BJ (cell line): ENCODE measurements at regions of chr21 and their contacts with region 1.

Region 1: GRCh38 chr21:42117229-42117966 is 46.3 kb downstream of the UMODL1 start:
- DNase-seq: no peak
- H3K4me3 ChIP-seq: no peak overlapping the region
- H3K27me3 ChIP-seq: peaks cover 18% of the 10 kb centered on the region
- CTCF ChIP-seq: peak; percentile 91

Region 2: DNA sequence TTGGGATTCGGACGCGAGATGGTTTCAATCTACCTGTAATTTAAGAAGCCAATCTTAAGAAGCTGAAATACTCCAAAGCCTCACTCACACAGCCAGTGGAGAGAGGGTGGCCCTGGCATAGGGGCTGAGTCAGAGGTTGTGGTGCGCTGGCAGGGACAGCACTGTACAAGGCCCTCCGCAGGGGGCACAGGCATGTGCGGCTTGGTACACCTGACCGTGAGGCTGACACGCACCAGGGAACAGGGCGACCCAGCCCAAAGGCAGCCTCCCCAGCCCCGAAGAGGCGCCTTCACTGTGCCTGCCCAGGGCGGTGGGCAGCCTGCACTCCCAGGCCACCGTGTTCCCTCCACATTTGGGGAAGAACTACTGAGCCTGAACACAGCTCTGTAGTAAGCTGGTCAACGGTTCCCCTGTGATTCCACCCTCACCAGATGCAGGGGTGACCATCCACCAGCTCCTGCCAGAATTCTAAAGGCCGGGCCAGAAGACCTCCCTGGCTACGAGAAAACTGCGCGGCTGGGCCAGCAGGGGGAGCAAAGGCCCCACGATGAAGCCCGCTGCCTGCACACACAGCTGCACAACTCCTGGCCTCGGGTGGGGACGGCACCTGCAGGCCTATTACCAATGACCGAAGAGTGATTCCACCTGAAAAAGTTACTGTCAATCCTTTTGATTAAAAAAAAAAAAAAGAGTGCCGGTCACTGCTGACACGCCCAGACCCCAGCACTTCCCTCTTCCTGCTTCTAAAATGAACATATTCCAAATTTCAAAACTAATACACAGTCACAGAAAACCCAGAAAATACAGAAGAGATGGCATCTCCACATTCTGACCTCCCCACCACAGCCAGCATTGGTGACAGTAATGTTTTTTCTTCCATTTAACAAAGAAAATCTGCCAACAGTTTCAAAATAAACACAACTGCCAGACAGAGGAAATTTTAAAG is 300.9 kb before region 1 on chr21:
- CTCF ChIA-PET with region 1: interaction called, 66 read pairs
- POLR2A ChIA-PET with region 1: no interaction called
- DNase-seq: no peak
- H3K4me3 ChIP-seq: no peak overlapping the region
- H3K27me3 ChIP-seq: no peaks in the 10 kb centered on the region
- CTCF ChIP-seq: peak; percentile 95

Region 3: DNA sequence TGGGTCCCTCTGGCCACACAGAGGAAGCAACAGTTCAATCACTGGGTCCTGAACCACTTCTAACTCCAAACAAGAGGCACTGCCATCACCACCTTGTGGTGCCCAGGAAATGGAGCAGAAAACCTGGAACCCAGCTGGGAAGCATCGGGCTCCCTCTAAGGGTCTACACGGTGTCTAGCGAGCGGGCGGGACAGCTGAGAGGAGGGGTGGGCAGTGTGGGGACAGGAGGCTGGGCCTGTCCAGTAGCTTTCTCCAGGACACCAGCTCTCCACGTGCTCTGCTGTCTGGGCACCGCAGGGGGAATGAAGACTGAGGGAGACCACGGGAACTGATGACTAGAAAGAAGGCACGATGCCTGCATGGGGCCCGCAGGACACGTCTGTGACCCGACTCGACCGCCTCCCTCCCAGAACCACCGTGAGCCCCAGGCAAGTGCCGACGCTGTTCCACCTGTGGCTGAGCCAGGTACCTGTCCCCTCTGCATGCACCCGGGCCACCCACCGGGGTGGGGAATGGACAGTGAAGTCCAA is 232.8 kb before region 1 on chr21:
- CTCF ChIA-PET with region 1: interaction called, 13 read pairs
- POLR2A ChIA-PET with region 1: no interaction called
- DNase-seq: no peak
- H3K4me3 ChIP-seq: no peak overlapping the region
- H3K27me3 ChIP-seq: no peaks in the 10 kb centered on the region
- CTCF ChIP-seq: no peak

Region 4: DNA sequence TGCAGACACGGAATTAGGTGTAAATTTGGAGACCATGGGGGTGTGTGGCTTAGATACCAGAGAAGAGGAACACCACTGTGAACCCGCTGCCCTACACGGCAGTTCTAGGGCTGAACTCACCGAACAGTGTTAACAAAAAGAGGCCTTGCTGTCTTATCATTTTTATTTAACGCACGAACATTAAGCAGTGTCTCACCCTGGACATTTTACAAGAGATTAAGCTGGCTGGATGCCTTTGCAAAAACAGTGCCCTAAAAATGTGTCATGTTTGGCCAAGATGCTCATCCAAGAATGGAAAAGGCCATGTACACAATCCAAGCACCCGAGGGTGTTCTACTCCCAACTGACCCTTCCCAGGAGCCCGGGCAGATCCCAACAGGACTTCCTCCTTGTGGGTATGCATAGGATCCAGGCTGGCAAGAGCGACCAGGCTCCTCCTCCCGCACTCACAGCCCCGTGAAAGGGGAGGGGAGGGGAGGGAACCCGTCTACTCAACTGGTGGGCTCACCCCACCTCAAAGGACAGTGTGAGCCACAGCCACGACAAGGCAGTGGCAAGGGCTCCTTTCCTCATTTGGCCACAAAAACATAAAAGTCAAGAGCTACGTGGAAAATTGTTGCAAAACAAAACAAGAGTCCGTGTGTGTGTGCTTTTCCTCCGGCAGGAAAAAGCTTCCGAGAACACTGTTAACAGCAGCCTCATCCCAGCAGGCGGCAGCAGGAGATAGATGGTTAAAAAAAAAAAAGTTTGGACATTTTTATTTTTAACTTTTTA is 183.9 kb before region 1 on chr21:
- CTCF ChIA-PET with region 1: interaction called, 20 read pairs
- POLR2A ChIA-PET with region 1: no interaction called
- DNase-seq: no peak
- H3K4me3 ChIP-seq: peak overlapping the region; percentile 20
- H3K27me3 ChIP-seq: no peaks in the 10 kb centered on the region
- CTCF ChIP-seq: peak; percentile 44

Region 5: DNA sequence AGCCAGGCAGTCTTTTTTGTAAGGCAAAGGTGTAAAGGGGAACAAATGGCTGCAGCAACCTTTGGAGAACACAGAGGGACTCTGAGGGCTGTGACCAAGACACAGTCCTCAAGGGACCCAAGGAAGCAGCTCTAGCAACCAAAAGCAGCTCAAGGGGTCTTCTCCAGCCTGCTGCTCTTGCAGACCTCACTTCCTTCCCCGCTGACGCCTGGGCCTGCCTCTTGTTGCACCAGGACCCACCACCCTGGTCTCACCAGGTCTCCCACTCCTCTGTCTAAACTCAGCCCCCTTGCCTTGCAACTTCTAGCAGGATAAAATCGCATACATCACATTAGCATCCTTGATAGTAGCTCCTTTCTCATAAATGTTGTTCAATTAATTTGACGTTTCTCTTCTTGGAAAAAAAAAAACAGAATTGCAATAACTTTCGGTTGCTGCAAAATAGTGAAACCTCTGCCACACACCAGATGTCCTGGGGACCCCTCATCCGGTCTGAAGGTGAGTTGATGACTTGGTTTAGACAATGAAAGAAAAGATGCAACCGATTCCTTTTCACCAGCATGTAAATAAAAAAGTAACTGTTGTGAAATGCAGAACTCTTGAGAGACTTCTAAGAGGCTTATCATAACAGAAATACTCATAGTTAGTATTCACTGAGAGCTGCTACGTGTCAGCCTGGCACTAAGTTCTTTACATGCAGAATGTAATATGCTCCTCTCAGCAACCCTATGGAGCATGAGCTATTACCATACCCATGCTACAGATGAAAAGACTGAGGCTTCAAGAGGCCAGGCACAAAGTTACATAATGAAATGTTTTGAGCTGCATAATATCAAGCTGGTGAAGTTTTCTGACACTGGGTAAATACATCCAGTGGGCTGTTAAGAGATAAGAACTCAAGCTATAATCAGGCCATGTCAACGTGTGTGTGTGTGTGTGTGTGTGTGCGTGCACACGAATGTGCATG is 12.2 kb after region 1 on chr21:
- CTCF ChIA-PET with region 1: interaction called, 11 read pairs
- POLR2A ChIA-PET with region 1: no interaction called
- DNase-seq: no peak
- H3K4me3 ChIP-seq: no peak overlapping the region
- H3K27me3 ChIP-seq: peaks cover 4% of the 10 kb centered on the region; the same call in 1 of the 2 replicates
- CTCF ChIP-seq: no peak

Region 6: DNA sequence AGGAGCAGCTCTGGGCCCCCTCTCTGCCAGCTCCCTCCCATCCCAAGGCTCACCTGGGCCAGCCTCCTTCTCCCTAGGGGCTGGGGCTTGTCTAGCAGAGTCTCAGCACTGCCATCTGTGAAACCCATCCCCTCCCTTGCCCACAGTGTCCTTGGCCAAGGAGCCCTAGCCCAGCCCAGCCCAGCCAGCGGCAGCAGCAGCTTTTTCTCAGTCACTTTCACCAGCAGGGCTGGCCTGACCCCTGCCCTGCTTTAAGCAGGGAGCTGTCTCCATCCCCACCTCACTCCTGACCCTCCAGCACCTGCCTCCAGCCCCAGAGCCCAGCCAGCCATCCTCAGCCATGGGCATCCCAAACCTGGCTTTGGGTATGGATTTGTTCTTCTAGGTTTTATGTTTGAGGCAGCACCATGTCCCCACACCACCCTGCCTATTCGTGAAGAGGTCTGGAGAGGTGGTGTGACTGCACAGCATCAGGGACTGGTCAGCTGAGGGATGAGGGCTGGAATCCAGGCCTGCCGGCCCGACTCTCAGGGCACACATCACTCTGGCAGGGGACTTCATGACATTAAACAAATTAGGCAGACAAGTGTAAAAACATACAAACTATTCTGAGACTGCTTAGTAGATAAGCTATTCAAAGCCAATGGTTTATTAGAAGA is 65.4 kb after region 1 on chr21:
- CTCF ChIA-PET with region 1: no interaction called
- POLR2A ChIA-PET with region 1: no interaction called
- DNase-seq: no peak
- H3K4me3 ChIP-seq: no peak overlapping the region
- H3K27me3 ChIP-seq: no peaks in the 10 kb centered on the region
- CTCF ChIP-seq: no peak

Region 7: GRCh38 chr21:42309753-42310221 is 192.4 kb after region 1 on chr21:
- CTCF ChIA-PET with region 1: no interaction called
- POLR2A ChIA-PET with region 1: no interaction called
- DNase-seq: no peak
- H3K4me3 ChIP-seq: no peak overlapping the region
- H3K27me3 ChIP-seq: peaks cover 5% of the 10 kb centered on the region; the same call in 1 of the 2 replicates
- CTCF ChIP-seq: peak; percentile 69